Activated CD8-positive, alpha-beta T cell treated with anti-CD3 and anti-CD28 coated beads for 36 hours (primary cell): ENCODE measurements at regions of chr16 and their contacts with region 1.

Region 1: GRCh38 chr16:4106516-4106915 is 9.7 kb downstream of the ADCY9 start:
- DNase-seq: no peak
- ATAC-seq: no peak
- H3K4me3 Mint-ChIP-seq: no peak overlapping the region
- H3K27ac Mint-ChIP-seq: no peak overlapping the region
- H3K4me1 Mint-ChIP-seq: peaks cover 14% of the 10 kb centered on the region
- H3K27me3 Mint-ChIP-seq: no peaks in the 10 kb centered on the region
- CTCF ChIP-seq: no peak

Region 2: DNA sequence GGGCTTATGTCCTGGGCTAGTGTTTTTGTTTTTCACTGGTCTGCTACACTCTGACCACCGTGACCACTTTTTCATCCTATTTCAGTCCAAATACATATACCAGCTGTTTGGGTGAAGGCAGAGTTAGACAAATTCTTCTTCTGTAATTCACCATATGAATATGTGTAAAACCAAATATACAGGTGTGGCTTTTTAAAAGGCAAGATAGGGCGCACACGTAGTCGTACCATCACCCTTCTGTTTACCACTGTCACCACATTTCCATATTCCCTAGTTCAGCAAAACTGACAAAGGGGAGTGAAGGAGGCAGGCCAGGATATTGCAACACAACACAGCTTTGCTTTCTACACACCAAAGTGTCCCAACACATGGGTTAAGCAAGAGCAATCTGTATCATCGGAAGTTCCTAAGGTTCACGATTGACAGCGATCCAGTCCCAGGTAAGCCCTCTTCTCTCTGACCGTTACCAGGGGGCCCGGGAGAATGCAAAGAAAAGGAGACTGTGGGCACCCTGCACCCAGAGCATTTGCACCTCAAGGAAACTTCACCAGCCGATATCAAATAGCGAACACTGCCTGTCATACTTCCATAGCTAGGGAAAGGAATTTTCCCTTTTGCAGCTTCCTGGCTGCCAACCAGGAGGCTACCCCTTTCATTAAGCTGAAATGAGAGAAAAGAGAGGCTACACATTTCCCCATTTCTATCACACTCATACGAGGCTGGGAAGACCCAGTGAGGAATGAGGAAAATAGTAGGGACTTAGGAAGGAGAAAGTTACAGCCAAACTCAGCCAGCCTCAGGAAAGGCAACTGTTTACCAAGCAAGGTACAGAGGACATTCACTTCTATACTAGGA is 249.1 kb before region 1 on chr16:
- CTCF ChIA-PET with region 1: no interaction called
- POLR2A ChIA-PET with region 1: no interaction called
- intact Hi-C with region 1: no loop called
- DNase-seq: no peak
- ATAC-seq: peak; percentile 41
- H3K4me3 Mint-ChIP-seq: no peak overlapping the region
- H3K27ac Mint-ChIP-seq: no peak overlapping the region
- H3K4me1 Mint-ChIP-seq: peaks cover 84% of the 10 kb centered on the region
- H3K27me3 Mint-ChIP-seq: no peaks in the 10 kb centered on the region
- CTCF ChIP-seq: no peak

Region 3: DNA sequence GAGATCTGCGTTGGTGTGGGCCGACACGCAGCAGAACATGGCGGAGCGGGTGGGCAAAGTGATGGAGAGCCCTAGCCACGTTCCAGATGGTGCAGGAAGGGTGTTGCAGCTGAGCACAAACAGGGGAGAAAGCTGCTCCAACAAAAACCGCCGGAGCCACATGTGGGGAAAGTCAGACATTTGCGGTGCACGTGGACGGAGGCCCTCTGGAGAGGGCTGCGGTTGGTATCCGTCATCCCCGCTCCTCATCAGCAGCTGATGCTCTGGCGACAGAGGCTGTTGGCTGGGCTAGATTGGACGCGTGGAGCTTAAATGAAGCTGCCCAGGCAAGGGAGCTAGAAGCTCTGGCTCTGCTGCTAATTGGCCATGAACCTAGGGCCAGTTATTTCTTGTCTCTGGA is 53.2 kb after region 1 on chr16:
- CTCF ChIA-PET with region 1: no interaction called
- POLR2A ChIA-PET with region 1: interaction called, 4 read pairs
- intact Hi-C with region 1: loop called (anchors 2 kb)
- DNase-seq: no peak
- ATAC-seq: no peak
- H3K4me3 Mint-ChIP-seq: no peak overlapping the region
- H3K27ac Mint-ChIP-seq: no peak overlapping the region
- H3K4me1 Mint-ChIP-seq: no peaks in the 10 kb centered on the region
- H3K27me3 Mint-ChIP-seq: no peaks in the 10 kb centered on the region
- CTCF ChIP-seq: no peak

Region 4: GRCh38 chr16:4198816-4199215 is 92.3 kb after region 1 on chr16:
- CTCF ChIA-PET with region 1: no interaction called
- POLR2A ChIA-PET with region 1: no interaction called
- intact Hi-C with region 1: no loop called
- DNase-seq: no peak
- ATAC-seq: no peak
- H3K4me3 Mint-ChIP-seq: no peak overlapping the region
- H3K27ac Mint-ChIP-seq: no peak overlapping the region
- H3K4me1 Mint-ChIP-seq: peaks cover 6% of the 10 kb centered on the region
- H3K27me3 Mint-ChIP-seq: peaks cover 4% of the 10 kb centered on the region
- CTCF ChIP-seq: no peak